MCF 10A (cell line): ENCODE measurements at regions of chr17 and their contacts with region 1.

Region 1: GRCh38 chr17:50783193-50783660 is 15.9 kb upstream of the ANKRD40CL start:
- DNase-seq: peak; percentile 84
- H3K4me3 Mint-ChIP-seq: no peak overlapping the region
- H3K27ac Mint-ChIP-seq: no peak overlapping the region
- H3K4me1 Mint-ChIP-seq: peaks cover 28% of the 10 kb centered on the region
- H3K27me3 Mint-ChIP-seq: no peaks in the 10 kb centered on the region
- CTCF ChIP-seq: peak; percentile 94

Region 2: DNA sequence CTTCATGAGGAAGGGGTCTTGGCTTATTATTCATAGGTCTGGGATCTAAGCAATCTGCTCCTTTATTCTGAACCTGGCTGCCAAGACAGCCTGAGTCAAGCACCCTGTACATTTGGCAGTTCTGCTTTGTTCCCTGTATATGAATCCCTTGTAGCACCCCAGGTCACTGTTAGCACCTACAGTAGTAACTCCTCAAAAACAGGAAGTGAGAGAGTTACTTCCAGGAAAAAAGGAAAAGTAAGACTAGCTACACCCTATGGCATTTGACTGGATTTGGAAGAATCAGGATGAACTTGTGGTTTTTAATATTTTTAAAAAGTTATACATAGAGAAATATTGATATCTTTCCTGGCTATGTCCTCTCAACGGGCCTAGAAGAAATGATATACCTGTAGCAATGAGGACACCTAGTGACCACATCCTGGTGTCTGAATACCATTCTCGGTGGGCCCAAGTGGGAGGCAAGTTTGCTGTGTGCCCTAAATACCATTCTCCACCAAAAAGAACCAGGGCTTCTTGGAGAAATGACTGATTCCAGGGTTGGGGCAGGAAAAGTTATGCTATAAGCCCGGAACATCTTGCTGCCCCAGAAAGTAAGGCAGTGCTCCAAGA is 85.5 kb before region 1 on chr17:
- CTCF ChIA-PET with region 1: interaction called, 12 read pairs
- POLR2A ChIA-PET with region 1: no interaction called
- intact Hi-C with region 1: no loop called
- DNase-seq: no peak
- H3K4me3 Mint-ChIP-seq: no peak overlapping the region
- H3K27ac Mint-ChIP-seq: peak overlapping the region; percentile 91
- H3K4me1 Mint-ChIP-seq: peaks cover 28% of the 10 kb centered on the region
- H3K27me3 Mint-ChIP-seq: no peaks in the 10 kb centered on the region
- CTCF ChIP-seq: no peak

Region 3: DNA sequence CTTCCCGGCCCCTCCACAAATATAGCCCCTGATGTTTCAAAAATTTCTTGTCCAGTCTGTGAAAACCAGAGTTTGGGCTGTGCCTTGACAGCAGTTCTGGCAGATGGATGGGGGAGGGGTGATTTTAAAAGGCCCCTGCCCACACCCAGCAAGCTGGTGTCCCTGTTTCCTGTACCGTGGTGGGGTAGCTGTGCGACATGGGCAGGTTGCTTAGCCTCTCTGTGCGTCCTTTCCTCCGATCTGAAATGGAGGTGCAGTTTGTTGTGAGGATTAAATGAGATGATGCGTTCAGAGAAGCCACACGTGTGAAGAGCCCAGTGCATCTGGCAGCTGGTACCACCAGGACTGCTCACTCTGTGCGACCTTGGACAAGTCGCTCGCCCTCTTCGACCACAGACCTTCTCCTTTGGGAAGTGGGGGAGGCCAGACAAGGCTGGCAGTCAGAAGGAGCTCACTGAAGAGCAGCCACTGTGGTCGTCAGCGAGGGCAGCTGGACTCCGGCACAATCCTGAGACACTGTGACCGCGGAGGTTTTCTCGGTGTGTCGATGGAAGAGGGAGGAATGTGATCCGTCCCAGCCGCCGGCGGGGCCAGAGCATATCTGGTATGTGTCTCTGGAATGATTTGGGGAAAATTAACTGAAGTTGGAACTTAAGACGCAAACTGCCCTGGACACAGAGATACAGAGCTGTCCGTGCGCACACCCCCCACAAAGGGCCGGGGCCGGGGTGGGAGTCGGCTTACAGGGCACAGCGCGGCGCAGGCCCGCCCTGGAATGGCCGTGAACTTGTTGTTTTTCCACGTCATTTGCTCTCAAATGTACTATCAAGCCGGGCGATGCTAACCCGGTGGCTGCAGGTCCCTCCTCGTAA is 51.4 kb after region 1 on chr17:
- CTCF ChIA-PET with region 1: interaction called, 320 read pairs
- POLR2A ChIA-PET with region 1: interaction called, 4 read pairs
- intact Hi-C with region 1: no loop called
- DNase-seq: no peak
- H3K4me3 Mint-ChIP-seq: no peak overlapping the region
- H3K27ac Mint-ChIP-seq: no peak overlapping the region
- H3K4me1 Mint-ChIP-seq: no peaks in the 10 kb centered on the region
- H3K27me3 Mint-ChIP-seq: no peaks in the 10 kb centered on the region
- CTCF ChIP-seq: no peak

Region 4: DNA sequence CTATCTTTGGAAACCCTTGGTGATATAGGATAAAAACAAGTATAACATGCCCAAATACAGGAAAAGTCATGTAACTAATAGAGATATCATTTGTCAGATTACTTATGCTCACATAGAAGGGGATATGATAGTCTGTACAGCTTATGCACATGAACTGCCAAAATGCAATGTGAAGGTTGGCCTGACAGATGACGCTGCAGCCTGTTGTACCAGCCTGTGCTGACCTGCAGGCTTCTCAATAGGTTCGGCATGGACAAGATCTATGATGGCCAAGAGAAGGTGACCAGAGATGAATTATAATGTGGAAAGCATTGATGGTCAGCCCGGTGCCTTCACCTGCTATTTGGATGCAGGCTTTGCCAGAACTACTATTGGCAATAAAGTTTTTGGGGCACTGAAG is 64.8 kb after region 1 on chr17:
- CTCF ChIA-PET with region 1: interaction called, 320 read pairs
- POLR2A ChIA-PET with region 1: interaction called, 23 read pairs
- intact Hi-C with region 1: no loop called
- DNase-seq: no peak
- H3K4me3 Mint-ChIP-seq: no peak overlapping the region
- H3K27ac Mint-ChIP-seq: no peak overlapping the region
- H3K4me1 Mint-ChIP-seq: peaks cover 22% of the 10 kb centered on the region
- H3K27me3 Mint-ChIP-seq: no peaks in the 10 kb centered on the region
- CTCF ChIP-seq: no peak

Region 5: DNA sequence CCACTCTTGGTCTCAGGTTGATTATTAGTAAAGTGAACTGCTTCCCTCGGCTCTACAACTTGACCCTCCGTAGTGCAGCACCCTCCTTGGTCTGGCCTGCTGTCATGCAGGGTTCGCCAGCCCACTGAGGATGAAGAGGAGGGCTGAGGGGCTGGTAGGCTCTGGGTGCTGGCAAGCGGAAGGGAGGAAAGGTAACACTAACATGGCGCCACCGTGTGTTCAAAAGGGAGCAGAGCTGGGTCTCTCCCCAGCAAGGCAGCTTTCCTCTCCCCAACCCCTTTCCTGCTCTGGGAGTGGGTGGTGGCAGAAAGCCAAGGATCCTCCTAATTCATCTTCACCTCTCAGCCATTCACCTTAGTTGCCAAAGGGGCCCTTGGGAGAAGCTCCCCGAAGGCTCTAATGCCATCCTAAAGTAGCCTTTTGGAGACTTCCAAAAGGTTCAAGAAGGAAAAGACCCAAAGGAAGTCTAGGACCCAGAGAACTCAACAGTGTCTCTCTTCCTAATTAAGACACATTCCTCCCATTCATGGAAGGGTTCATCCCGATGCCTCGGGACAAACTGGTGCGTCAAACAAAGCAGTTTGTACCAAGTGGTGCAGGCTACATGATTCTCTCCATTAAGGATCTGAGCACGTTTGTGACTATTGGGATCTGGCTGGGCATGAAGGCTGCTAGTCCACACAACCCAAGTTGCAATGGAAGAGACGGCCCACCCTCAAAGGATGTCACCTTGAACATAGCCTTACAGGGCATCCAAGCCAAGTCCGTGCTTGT is 173.7 kb after region 1 on chr17:
- CTCF ChIA-PET with region 1: interaction called, 27 read pairs
- POLR2A ChIA-PET with region 1: interaction called, 5 read pairs
- intact Hi-C with region 1: no loop called
- DNase-seq: peak; percentile 72
- H3K4me3 Mint-ChIP-seq: no peak overlapping the region
- H3K27ac Mint-ChIP-seq: no peak overlapping the region
- H3K4me1 Mint-ChIP-seq: peaks cover 32% of the 10 kb centered on the region
- H3K27me3 Mint-ChIP-seq: no peaks in the 10 kb centered on the region
- CTCF ChIP-seq: peak; percentile 64